GM12878 (cell line): ENCODE measurements at regions of chr5 and their contacts with region 1.

Region 1: GRCh38 chr5:88889189-88890069 is 6.4 kb upstream of the MEF2C start:
- DNase-seq: no peak
- ATAC-seq: peak; percentile 56
- H3K4me3 ChIP-seq: peak overlapping the region; percentile 87
- H3K27ac ChIP-seq: peak overlapping the region; percentile 98
- H3K4me1 ChIP-seq: peaks cover 3% of the 10 kb centered on the region
- H3K27me3 ChIP-seq: no peaks in the 10 kb centered on the region
- CTCF ChIP-seq: no peak
- EP300 ChIP-seq: no peak
- POLR2A ChIP-seq: peak; percentile 92
- RAD21 ChIP-seq: peak; percentile 2; the same call in 1 of the 2 replicates

Region 2: GRCh38 chr5:88736494-88736893 is 152.9 kb before region 1 on chr5:
- CTCF ChIA-PET with region 1: interaction called, 24 read pairs
- POLR2A ChIA-PET with region 1: interaction called, 6 read pairs
- RAD21 ChIA-PET with region 1: interaction called, 99 read pairs
- SMC1A ChIA-PET with region 1: interaction called, 76 read pairs
- in situ Hi-C with region 1: loop called (anchors 5 kb)
- intact Hi-C with region 1: no loop called
- DNase-seq: peak; percentile 71
- ATAC-seq: peak; percentile 33
- H3K4me3 ChIP-seq: no peak overlapping the region
- H3K27ac ChIP-seq: peak overlapping the region; percentile 78
- H3K4me1 ChIP-seq: peaks cover 69% of the 10 kb centered on the region
- H3K27me3 ChIP-seq: no peaks in the 10 kb centered on the region
- CTCF ChIP-seq: no peak
- EP300 ChIP-seq: 0 out of 4 replicates have a peak, but pooled peaks of 1 of the 2 experiments have one; percentile 14
- POLR2A ChIP-seq: 0 out of 2 replicates have a peak, but pooled peaks have one; percentile 23
- RAD21 ChIP-seq: no peak

Region 3: GRCh38 chr5:88769165-88769564 is 120.3 kb before region 1 on chr5:
- CTCF ChIA-PET with region 1: no interaction called
- POLR2A ChIA-PET with region 1: no interaction called
- RAD21 ChIA-PET with region 1: no interaction called
- SMC1A ChIA-PET with region 1: no interaction called
- in situ Hi-C with region 1: no loop called
- intact Hi-C with region 1: no loop called
- DNase-seq: no peak
- ATAC-seq: no peak
- H3K4me3 ChIP-seq: no peak overlapping the region
- H3K27ac ChIP-seq: no peak overlapping the region
- H3K4me1 ChIP-seq: peaks cover 3% of the 10 kb centered on the region; the same call in 1 of the 2 replicates
- H3K27me3 ChIP-seq: no peaks in the 10 kb centered on the region
- CTCF ChIP-seq: no peak
- EP300 ChIP-seq: no peak
- POLR2A ChIP-seq: no peak
- RAD21 ChIP-seq: no peak

Region 4: DNA sequence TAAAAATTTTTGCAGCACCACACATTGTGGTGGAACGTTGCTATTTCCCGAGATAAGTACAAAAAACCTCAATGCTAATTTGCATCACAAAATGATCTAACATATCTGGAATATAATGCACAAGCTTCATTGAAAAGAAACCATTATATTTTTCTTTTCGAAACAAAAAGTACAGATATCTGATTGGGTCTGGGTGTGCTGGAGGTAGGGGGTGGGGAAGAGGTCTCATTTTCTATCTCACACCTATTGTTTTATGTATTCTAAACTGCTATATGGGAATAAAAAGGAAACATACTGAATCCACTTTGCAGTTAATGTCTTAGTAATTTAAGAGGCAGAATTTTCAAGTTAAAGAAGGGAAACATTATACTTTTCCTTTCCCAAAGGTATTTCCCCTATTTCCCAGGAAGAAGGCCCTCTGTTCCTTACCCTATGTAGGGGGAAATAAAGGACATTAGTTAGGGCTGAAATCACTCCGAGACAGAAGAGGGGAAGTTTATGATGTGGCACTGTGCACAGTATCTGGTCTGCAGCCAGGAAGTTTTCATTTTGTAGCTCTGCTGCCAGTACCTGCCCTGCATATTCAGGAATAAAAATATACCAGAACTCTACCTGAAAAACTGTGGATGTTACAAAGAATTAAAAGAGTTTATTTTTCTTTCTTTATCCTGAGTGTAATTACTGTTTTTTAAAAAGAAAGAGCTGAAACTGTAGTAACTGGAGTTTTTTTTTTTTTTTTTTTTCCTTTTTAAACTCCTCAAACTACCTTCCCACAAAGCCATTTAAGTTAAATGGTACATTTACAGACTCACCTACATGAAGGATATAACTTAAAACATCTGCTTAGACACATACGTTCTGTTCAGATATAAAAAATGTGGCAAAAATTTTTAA is 13.8 kb before region 1 on chr5:
- CTCF ChIA-PET with region 1: interaction called, 4 read pairs
- POLR2A ChIA-PET with region 1: interaction called, 4 read pairs
- RAD21 ChIA-PET with region 1: interaction called, 18 read pairs
- SMC1A ChIA-PET with region 1: interaction called, 10 read pairs
- in situ Hi-C with region 1: no loop called
- intact Hi-C with region 1: no loop called
- DNase-seq: no peak
- ATAC-seq: peak; percentile 65
- H3K4me3 ChIP-seq: peak overlapping the region; percentile 65
- H3K27ac ChIP-seq: peak overlapping the region; percentile 67
- H3K4me1 ChIP-seq: no peaks in the 10 kb centered on the region
- H3K27me3 ChIP-seq: no peaks in the 10 kb centered on the region
- CTCF ChIP-seq: no peak
- EP300 ChIP-seq: no peak
- POLR2A ChIP-seq: peak; percentile 22; the same call in 1 of the 2 replicates
- RAD21 ChIP-seq: no peak

Region 5: GRCh38 chr5:89028595-89029285 is 139.3 kb after region 1 on chr5:
- CTCF ChIA-PET with region 1: no interaction called
- POLR2A ChIA-PET with region 1: no interaction called
- RAD21 ChIA-PET with region 1: no interaction called
- SMC1A ChIA-PET with region 1: no interaction called
- in situ Hi-C with region 1: no loop called
- intact Hi-C with region 1: no loop called
- DNase-seq: no peak
- ATAC-seq: peak; percentile 35
- H3K4me3 ChIP-seq: no peak overlapping the region
- H3K27ac ChIP-seq: no peak overlapping the region
- H3K4me1 ChIP-seq: no peaks in the 10 kb centered on the region
- H3K27me3 ChIP-seq: no peaks in the 10 kb centered on the region
- CTCF ChIP-seq: no peak
- EP300 ChIP-seq: no peak
- POLR2A ChIP-seq: no peak
- RAD21 ChIP-seq: no peak

Region 6: DNA sequence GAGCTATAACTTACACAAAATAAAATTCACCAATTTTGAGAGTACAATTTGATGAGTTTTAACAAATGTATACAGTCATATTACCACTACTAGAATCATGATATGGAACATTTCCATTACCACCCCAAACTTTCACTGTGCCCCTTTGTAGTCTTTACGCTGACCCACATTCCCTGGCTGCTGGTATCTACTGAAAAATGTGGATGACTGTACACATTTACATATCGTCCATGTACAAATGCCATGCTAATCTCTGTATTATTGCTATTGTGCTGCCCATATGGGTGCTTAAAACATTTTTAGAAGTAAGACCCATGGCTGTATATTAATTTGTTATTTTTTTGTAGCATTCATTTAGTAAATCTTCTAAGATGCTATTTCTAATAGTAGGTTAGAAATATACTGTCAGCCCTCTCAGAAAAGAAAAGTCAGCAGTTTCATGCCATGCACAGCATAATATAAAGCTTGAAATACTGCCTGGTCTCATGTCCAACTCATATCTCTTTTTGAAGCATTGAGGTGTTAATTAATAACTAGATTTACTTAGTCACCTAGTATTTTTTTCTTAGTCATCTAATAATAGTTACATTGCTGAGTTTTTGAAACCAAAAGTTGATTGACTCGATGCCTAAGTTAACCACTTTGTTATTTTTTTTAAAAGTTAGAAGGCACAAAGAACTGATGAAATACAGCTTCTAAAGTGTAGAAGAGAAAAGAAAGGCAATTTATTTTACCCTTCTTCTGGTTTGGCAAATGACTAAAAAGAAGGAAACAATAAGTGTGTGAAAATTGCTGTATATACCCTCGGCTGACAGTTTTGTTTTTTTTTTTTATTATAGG is 181.9 kb after region 1 on chr5:
- CTCF ChIA-PET with region 1: interaction called, 3 read pairs
- POLR2A ChIA-PET with region 1: no interaction called
- RAD21 ChIA-PET with region 1: interaction called, 19 read pairs
- SMC1A ChIA-PET with region 1: interaction called, 11 read pairs
- in situ Hi-C with region 1: no loop called
- intact Hi-C with region 1: no loop called
- DNase-seq: peak; percentile 33
- ATAC-seq: peak; percentile 92
- H3K4me3 ChIP-seq: peak overlapping the region; percentile 58
- H3K27ac ChIP-seq: peak overlapping the region; percentile 92
- H3K4me1 ChIP-seq: peaks cover 14% of the 10 kb centered on the region
- H3K27me3 ChIP-seq: no peaks in the 10 kb centered on the region
- CTCF ChIP-seq: no peak
- EP300 ChIP-seq: peak; percentile 52 to 66; a peak in 2 of 4 replicates
- POLR2A ChIP-seq: no peak
- RAD21 ChIP-seq: 0 out of 2 replicates have a peak, but pooled peaks have one; percentile 2

Region 7: DNA sequence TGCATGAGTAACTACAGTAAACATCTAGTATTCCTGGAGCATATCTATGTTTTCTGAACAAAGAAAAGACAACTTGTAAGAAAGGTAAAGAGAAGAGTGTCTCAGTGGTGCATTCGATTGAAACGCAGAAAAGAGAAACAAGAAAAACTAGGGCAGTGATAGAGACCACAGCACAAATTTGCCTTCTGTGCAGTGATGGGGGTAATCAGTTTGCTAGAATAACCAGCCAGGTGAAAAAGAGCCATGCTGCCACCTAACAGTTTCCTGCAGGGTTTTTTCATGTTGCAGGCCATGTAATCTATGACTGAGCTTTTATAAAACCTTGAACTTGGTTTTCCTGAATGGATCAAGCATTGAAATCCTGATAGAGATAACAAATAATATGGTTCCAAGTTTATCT is 191.9 kb after region 1 on chr5:
- CTCF ChIA-PET with region 1: interaction called, 6 read pairs
- POLR2A ChIA-PET with region 1: interaction called, 3 read pairs
- RAD21 ChIA-PET with region 1: interaction called, 8 read pairs
- SMC1A ChIA-PET with region 1: interaction called, 6 read pairs
- in situ Hi-C with region 1: no loop called
- intact Hi-C with region 1: loop called (anchors 5 kb)
- DNase-seq: peak; percentile 62
- ATAC-seq: peak; percentile 89
- H3K4me3 ChIP-seq: peak overlapping the region; percentile 3; the same call in 1 of the 2 replicates
- H3K27ac ChIP-seq: peak overlapping the region; percentile 55
- H3K4me1 ChIP-seq: peaks cover 11% of the 10 kb centered on the region
- H3K27me3 ChIP-seq: no peaks in the 10 kb centered on the region
- CTCF ChIP-seq: peak in 1 of 3 experiments; percentile 36; a peak in 2 of 6 replicates
- EP300 ChIP-seq: 0 out of 4 replicates have a peak, but pooled peaks of 1 of the 2 experiments have one; percentile 21
- POLR2A ChIP-seq: no peak
- RAD21 ChIP-seq: peak; percentile 54